Naive thymus-derived CD8-positive, alpha-beta T cell (primary cell): ENCODE measurements at regions of chr13 and their contacts with region 1.

Region 1: GRCh38 chr13:42991892-42992763 is at the start of gene EPSTI1:
- DNase-seq: peak; percentile 38 to 84 (median 68)
- ATAC-seq: peak; percentile 83 to 84
- H3K4me3 Mint-ChIP-seq: peak within 1 kb of the TSS; percentile 88 to 97 (median 96)
- H3K27ac Mint-ChIP-seq: peak within 1 kb of the TSS; percentile 99 to 100 (median 99)
- H3K4me1 Mint-ChIP-seq: peaks cover 17 to 59% (median 38%) of the 10 kb centered on the region in 4 donors
- H3K27me3 Mint-ChIP-seq: no peaks in the 10 kb centered on the region
- polyA plus RNA-seq, gene EPSTI1: 10.1 to 10.8 (median 10.8) TPM

Region 2: GRCh38 chr13:43023289-43023951 is 31.3 kb after region 1 on chr13 and contains the start of gene DNAJC15:
- POLR2A ChIA-PET with region 1: interaction called, 24 read pairs
- DNase-seq: peak; percentile 54 to 89 (median 72)
- ATAC-seq: peak; percentile 92 to 94
- H3K4me3 Mint-ChIP-seq: peak within 1 kb of the TSS; percentile 90 to 99 (median 96)
- H3K27ac Mint-ChIP-seq: peak within 1 kb of the TSS; percentile 92 to 99 (median 98)
- H3K4me1 Mint-ChIP-seq: peaks cover 14 to 38% (median 22%) of the 10 kb centered on the region in 4 donors
- H3K27me3 Mint-ChIP-seq: no peaks in the 10 kb centered on the region
- polyA plus RNA-seq, gene DNAJC15: 12.7 to 26.5 (median 14.1) TPM

Region 3: DNA sequence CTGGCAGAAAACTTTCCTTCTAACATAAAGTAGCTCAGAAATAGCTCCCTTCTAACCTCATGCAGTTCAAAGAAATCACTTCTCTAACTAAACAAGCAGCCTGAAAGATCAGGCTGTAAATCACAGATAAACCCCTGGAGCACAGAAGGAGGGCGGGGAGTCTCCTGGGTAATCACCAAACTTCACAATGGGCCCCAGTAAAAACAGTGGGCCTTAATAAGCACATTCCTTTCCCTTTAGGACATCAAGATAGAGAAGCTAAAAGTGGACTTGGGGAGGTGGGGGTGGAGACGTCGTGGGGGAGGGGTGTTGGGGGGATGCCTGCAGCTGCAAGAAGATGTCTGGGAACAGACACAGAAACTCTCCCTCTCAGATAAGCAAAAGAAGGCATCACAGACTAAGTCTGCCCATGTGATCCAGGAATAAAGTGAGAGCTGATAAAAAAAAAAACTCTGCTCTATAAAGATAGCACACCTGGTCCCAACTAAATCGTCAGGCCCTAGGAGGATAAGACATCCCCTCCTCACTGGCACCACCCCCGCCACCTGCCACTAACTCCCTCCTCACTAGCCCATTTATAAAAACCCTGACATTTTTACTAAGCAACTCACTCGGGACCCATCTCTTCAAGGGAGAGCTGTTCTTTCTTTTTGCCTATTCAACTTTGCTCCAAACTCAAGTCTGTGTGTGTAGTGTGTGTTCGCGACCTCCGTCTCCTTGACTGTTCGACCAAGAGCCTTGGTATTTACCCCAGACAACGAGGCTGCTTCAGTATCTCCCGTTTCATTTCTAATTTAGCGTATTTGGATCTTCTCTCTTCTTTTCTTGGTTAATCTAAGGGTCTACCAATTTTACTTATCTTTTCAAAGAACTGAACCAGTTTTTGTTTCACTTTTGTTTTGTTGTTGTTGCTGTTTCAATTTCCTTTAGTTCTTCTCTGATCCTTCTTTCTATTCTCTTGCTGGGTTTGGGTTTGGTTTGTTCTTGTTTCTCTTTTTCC is 63.0 kb after region 1 on chr13:
- POLR2A ChIA-PET with region 1: interaction called, 26 read pairs
- DNase-seq: peak in 6 of 10 donors; percentile 11 to 57 (median 34)
- ATAC-seq: peak; percentile 37 to 46
- H3K4me3 Mint-ChIP-seq: no peak overlapping the region
- H3K27ac Mint-ChIP-seq: no peak overlapping the region
- H3K4me1 Mint-ChIP-seq: peaks cover 26 to 41% (median 32%) of the 10 kb centered on the region in 4 donors
- H3K27me3 Mint-ChIP-seq: no peaks in the 10 kb centered on the region